ENCODE measurements at regions of chr15 and their contacts with region 1.

Region 1: DNA sequence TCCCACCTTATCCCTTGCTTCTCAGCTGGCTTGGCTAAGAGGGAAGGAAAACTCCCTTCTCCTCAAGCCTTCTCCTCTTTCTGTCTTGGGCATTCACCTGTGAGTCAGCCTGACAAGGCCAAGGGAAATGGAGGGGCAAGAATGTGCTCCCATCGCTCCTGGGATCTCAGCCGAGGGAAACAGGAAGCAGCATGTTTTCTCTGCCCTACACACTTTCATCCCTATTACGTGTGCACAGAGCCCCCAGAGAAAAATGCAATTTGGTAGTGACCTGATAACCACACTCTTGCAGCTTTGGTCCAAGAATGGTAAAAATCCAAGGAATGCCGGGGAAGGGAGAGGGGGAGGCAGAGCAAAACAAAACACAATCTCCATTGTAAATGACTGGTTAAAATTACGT is 32.9 kb upstream of the MTMR10 start:
- DNase-seq: peak; percentile 97
- H3K4me3 ChIP-seq: no peak overlapping the region
- H3K27ac ChIP-seq: peak overlapping the region; percentile 100
- H3K4me1 ChIP-seq: peaks cover 43% of the 10 kb centered on the region
- H3K27me3 ChIP-seq: no peaks in the 10 kb centered on the region
- CTCF ChIP-seq: no peak
- POLR2A ChIP-seq: peak; percentile 58

Region 2: DNA sequence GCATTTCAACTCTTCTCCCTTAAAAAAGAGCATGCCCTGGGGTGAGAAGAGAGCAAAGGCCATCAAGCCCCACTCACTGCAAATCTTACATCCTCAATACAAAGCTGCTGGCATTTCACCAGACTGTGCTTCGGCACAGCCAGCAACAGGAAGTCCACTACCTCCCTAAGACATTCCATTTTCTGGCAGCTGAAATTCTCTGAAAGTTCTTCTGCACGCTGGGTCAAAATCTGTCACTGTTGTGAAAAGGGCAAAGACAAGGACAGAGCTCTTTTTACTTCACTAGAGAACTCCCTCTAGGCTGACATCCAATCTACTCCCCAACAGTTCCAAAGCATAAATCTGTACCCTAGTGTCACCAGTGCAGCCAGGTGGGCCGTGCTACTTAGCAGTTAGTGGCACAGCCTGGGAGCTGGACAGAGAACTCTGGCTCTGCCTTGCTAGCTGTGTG is 39.2 kb before region 1 on chr15:
- CTCF ChIA-PET with region 1: interaction called, 11 read pairs
- POLR2A ChIA-PET with region 1: interaction called, 8 read pairs
- dilution Hi-C with region 1: no loop called
- intact Hi-C with region 1: loop called (anchors 2 kb)
- DNase-seq: peak; percentile 61
- H3K4me3 ChIP-seq: peak overlapping the region in 2 of 3 experiments; percentile 19 to 42
- H3K27ac ChIP-seq: peak overlapping the region; percentile 23
- H3K4me1 ChIP-seq: peaks cover 59% of the 10 kb centered on the region
- H3K27me3 ChIP-seq: no peaks in the 10 kb centered on the region
- CTCF ChIP-seq: no peak
- POLR2A ChIP-seq: no peak

Region 3: DNA sequence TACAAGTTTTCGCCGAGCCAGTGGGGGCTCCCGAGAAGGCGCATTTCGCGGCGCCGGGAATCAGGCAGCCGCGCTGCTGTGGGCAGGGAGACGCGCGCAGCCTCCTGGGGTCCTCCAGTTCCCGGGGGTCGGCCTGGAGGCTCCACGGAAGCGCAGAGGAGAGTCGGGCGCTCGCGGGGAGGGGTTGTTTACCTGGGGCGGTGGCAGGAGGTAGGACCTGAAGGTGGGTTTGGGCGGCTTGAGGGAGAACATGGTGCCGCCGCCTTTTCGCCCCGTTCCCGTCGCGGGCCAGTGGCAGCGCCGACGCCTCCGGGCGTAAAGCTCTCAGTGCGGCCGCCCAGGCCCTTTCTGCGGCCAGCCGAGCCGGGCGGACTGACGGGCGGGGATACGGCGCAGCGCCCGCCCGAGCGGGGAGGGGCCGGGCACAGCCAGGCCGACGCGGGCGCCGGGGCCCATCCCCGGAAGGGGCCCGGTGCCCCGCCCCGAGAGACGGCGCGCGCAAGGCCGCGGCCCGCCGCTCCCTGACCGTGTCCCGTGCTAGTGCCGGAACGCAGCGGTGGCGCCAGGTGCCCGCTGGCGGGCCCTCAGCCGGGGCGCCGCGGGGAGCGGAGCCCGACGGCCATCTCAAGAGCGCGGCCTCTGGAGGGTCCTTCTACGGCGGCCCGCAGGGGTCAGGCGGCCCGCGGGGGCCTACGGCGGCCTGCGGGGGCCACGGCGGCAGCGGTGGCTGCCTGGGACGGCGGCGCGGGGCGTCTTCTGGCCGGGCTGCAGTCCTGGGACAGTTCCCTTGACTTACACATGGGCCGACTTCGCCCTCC is 32.9 kb before region 1 on chr15 and contains the start of gene MTMR10:
- CTCF ChIA-PET with region 1: interaction called, 7 read pairs
- POLR2A ChIA-PET with region 1: interaction called, 9 read pairs
- dilution Hi-C with region 1: no loop called
- intact Hi-C with region 1: loop called (anchors 2 kb)
- DNase-seq: peak; percentile 78
- H3K4me3 ChIP-seq: peak within 1 kb of the TSS; percentile 81 to 96 (median 91)
- H3K27ac ChIP-seq: peak within 1 kb of the TSS; percentile 88
- H3K4me1 ChIP-seq: peaks cover 31% of the 10 kb centered on the region
- H3K27me3 ChIP-seq: no peaks in the 10 kb centered on the region
- CTCF ChIP-seq: no peak
- POLR2A ChIP-seq: peak; percentile 93
- total RNA-seq, gene MTMR10: 65.5 and 88.5 TPM in 2 replicates

Region 4: GRCh38 chr15:31013538-31014228 is 10.6 kb before region 1 on chr15:
- CTCF ChIA-PET with region 1: interaction called, 11 read pairs
- POLR2A ChIA-PET with region 1: no interaction called
- dilution Hi-C with region 1: no loop called
- intact Hi-C with region 1: no loop called
- DNase-seq: peak; percentile 20
- H3K4me3 ChIP-seq: no peak overlapping the region
- H3K27ac ChIP-seq: no peak overlapping the region
- H3K4me1 ChIP-seq: no peaks in the 10 kb centered on the region
- H3K27me3 ChIP-seq: no peaks in the 10 kb centered on the region
- CTCF ChIP-seq: no peak
- POLR2A ChIP-seq: no peak

Region 5: DNA sequence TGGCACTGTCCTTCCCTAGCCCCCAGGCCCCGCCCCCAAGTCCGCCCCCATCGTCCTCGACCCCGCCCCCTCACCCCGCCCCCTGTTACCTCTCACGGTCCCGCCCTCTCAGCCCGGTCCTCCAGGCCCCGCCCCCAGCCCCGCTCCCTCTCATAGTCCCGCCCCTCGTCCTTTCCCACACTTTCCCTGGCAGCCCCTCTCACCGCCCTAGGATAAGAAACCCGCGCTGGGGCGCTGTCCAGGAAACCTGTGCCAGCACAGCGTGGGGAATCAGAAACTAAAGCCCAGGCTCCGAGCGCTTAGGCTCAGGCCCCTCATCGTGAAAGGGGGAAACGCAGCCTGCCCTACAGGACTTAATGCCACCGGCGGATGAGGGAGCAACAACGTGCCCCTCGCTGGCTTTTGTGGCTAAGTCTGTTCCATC is 56.3 kb after region 1 on chr15:
- CTCF ChIA-PET with region 1: interaction called, 5 read pairs
- POLR2A ChIA-PET with region 1: no interaction called
- dilution Hi-C with region 1: no loop called
- intact Hi-C with region 1: loop called (anchors 5 kb)
- DNase-seq: peak; percentile 44
- H3K4me3 ChIP-seq: peak overlapping the region in 1 of 3 experiments; percentile 18
- H3K27ac ChIP-seq: no peak overlapping the region
- H3K4me1 ChIP-seq: no peaks in the 10 kb centered on the region
- H3K27me3 ChIP-seq: peaks cover 0 to 9% of the 10 kb centered on the region in 2 experiments
- CTCF ChIP-seq: no peak
- POLR2A ChIP-seq: no peak

Region 6: DNA sequence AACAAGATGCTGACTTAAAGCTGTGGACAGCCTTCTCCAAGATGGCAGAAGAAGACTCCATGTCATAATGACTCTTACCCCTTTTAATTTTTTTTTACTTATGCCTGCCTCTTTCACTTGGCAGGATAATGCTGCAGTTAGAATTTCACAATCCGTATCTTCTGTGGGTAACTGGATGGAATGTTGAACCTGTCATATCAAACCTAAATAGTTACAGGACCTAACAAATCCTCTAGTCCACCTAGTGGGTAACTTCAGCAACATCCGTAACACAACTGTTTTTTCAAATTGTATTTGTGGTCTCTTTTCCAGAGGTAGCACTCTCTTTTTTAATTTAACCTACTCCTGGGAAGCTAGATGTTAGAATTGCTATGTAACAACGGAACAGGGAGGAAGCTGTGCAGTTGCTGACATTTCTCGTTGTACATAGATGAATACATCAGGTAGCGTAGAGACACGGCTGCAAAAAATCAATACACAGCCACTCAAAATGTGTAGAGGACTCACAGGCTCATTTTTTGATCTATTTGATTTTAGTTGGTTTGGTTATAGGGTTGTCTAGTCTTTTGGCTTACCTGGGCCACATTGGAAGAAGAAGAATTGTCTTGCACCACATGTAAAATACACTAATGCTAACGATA is 121.1 kb after region 1 on chr15:
- CTCF ChIA-PET with region 1: no interaction called
- POLR2A ChIA-PET with region 1: no interaction called
- dilution Hi-C with region 1: no loop called
- intact Hi-C with region 1: no loop called
- DNase-seq: no peak
- H3K4me3 ChIP-seq: no peak overlapping the region
- H3K27ac ChIP-seq: no peak overlapping the region
- H3K4me1 ChIP-seq: no peaks in the 10 kb centered on the region
- H3K27me3 ChIP-seq: peaks cover 0 to 2% of the 10 kb centered on the region in 2 experiments
- CTCF ChIP-seq: no peak
- POLR2A ChIP-seq: no peak